ENCODE measurements at regions of chr17 and their contacts with region 1.

Region 1: GRCh38 chr17:72661093-72661944 is 431.2 kb downstream of the SLC39A11 start:
- DNase-seq: peak in 2 of 10 donors; percentile 39 to 42
- H3K4me3 ChIP-seq: no peak overlapping the region
- H3K27ac ChIP-seq: no peak overlapping the region
- H3K27me3 ChIP-seq: no peaks in the 10 kb centered on the region
- CTCF ChIP-seq: no peak

Region 2: GRCh38 chr17:72646176-72646575 is 15.1 kb before region 1 on chr17:
- intact Hi-C with region 1: no loop called
- DNase-seq: peak in 1 of 10 donors; percentile 1
- H3K4me3 ChIP-seq: no peak overlapping the region
- H3K27ac ChIP-seq: no peak overlapping the region
- H3K27me3 ChIP-seq: peaks cover 0 to under 1% (median 0%) of the 10 kb centered on the region in 45 donors
- CTCF ChIP-seq: no peak

Region 3: GRCh38 chr17:72699545-72699944 is 38.2 kb after region 1 on chr17:
- intact Hi-C with region 1: loop called in 1 of 2 experiments (anchors 5 kb)
- DNase-seq: peak in 9 of 10 donors; percentile 31 to 86 (median 64)
- H3K4me3 ChIP-seq: no peak overlapping the region
- H3K27ac ChIP-seq: peak overlapping the region in 22 of 59 donors; percentile 18 to 68 (median 40)
- H3K27me3 ChIP-seq: no peaks in the 10 kb centered on the region
- CTCF ChIP-seq: no peak

Measured in dorsolateral prefrontal cortex (tissue), 120 donors.